ENCODE measurements at regions of chr6 and their contacts with region 1.

Region 1: GRCh38 chr6:14066782-14067406 is 50.7 kb upstream of the CD83 start:
- DNase-seq: no peak
- H3K4me3 ChIP-seq: no peak overlapping the region
- H3K27ac ChIP-seq: no peak overlapping the region
- H3K4me1 ChIP-seq: peaks cover 6% of the 10 kb centered on the region
- H3K27me3 ChIP-seq: no peaks in the 10 kb centered on the region
- CTCF ChIP-seq: peak; percentile 44 to 69 (median 59)
- EP300 ChIP-seq: no peak
- POLR2A ChIP-seq: no peak

Region 2: GRCh38 chr6:13916230-13916944 is 150.5 kb before region 1 on chr6:
- intact Hi-C with region 1: loop called in 1 of 4 experiments (anchors 10 kb)
- DNase-seq: no peak
- H3K4me3 ChIP-seq: no peak overlapping the region
- H3K27ac ChIP-seq: no peak overlapping the region
- H3K4me1 ChIP-seq: no peaks in the 10 kb centered on the region
- H3K27me3 ChIP-seq: no peaks in the 10 kb centered on the region
- CTCF ChIP-seq: no peak
- EP300 ChIP-seq: no peak
- POLR2A ChIP-seq: no peak

Region 3: GRCh38 chr6:14055541-14055940 is 11.4 kb before region 1 on chr6:
- intact Hi-C with region 1: no loop called
- DNase-seq: no peak
- H3K4me3 ChIP-seq: no peak overlapping the region
- H3K27ac ChIP-seq: no peak overlapping the region
- H3K4me1 ChIP-seq: no peaks in the 10 kb centered on the region
- H3K27me3 ChIP-seq: no peaks in the 10 kb centered on the region
- CTCF ChIP-seq: no peak
- EP300 ChIP-seq: no peak
- POLR2A ChIP-seq: no peak